Natural killer cell (primary cell): ENCODE measurements at regions of chr7 and their contacts with region 1.

Region 1: GRCh38 chr7:63900394-63901203 is 98.0 kb upstream of the ZNF722 start:
- DNase-seq: peak; percentile 86 to 93
- ATAC-seq: peak; percentile 46 to 96 (median 93)
- H3K4me3 ChIP-seq: peak overlapping the region; percentile 82
- H3K4me3 Mint-ChIP-seq: peak overlapping the region; percentile 95
- H3K27ac ChIP-seq: peak overlapping the region; percentile 81
- H3K27ac Mint-ChIP-seq: peak overlapping the region; percentile 84 to 87
- H3K4me1 ChIP-seq: peaks cover 19% of the 10 kb centered on the region
- H3K4me1 Mint-ChIP-seq: peaks cover 0 to 27% of the 10 kb centered on the region in 2 donors
- H3K27me3 ChIP-seq: no peaks in the 10 kb centered on the region
- H3K27me3 Mint-ChIP-seq: no peaks in the 10 kb centered on the region
- CTCF ChIP-seq: no peak

Region 2: GRCh38 chr7:64313740-64314491 is 413.3 kb after region 1 on chr7 and contains the start of gene ZNF736:
- intact Hi-C with region 1: loop called (anchors 1 kb)
- DNase-seq: peak; percentile 87 to 93
- ATAC-seq: peak; percentile 99 to 100 (median 100)
- H3K4me3 ChIP-seq: peak within 1 kb of the TSS; percentile 74
- H3K4me3 Mint-ChIP-seq: peak within 1 kb of the TSS; percentile 95
- H3K27ac ChIP-seq: peak within 1 kb of the TSS; percentile 70
- H3K27ac Mint-ChIP-seq: peak within 1 kb of the TSS; percentile 91 to 92
- H3K4me1 ChIP-seq: peaks cover 19% of the 10 kb centered on the region
- H3K4me1 Mint-ChIP-seq: peaks cover 23 to 36% of the 10 kb centered on the region in 2 donors
- H3K27me3 ChIP-seq: no peaks in the 10 kb centered on the region
- H3K27me3 Mint-ChIP-seq: no peaks in the 10 kb centered on the region
- CTCF ChIP-seq: no peak
- total RNA-seq, gene ZNF736: 19.6 to 26.6 (median 22.7) TPM

Region 3: DNA sequence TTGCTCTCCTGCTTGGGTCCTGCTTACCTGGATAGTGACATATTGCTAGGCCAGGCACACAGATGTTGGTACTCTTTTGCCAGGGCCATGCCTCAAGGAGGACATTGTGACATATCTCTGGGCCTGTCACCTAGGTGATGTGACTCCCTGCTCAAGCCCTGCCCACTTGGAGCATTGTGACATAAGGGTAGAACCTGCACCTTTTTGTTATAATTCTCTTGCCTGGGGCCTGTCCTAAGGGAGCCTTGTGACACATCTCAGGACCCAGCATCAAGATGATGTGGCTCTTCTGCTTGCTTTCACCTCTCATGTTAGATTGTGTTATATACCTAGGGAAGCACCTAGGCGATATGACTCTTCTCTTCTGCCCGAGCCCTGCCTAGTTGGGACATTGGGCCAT is 470.5 kb after region 1 on chr7:
- intact Hi-C with region 1: no loop called
- DNase-seq: no peak
- ATAC-seq: no peak
- H3K4me3 ChIP-seq: no peak overlapping the region
- H3K4me3 Mint-ChIP-seq: no peak overlapping the region
- H3K27ac ChIP-seq: no peak overlapping the region
- H3K27ac Mint-ChIP-seq: no peak overlapping the region
- H3K4me1 ChIP-seq: no peaks in the 10 kb centered on the region
- H3K4me1 Mint-ChIP-seq: no peaks in the 10 kb centered on the region
- H3K27me3 ChIP-seq: no peaks in the 10 kb centered on the region
- H3K27me3 Mint-ChIP-seq: no peaks in the 10 kb centered on the region
- CTCF ChIP-seq: no peak